ENCODE measurements at regions of chr10 and their contacts with region 1.

Region 1: GRCh38 chr10:94088926-94089381 is 95.2 kb downstream of the PLCE1 start:
- DNase-seq: peak in 1 of 2 donors; percentile 23
- ATAC-seq: peak in 6 of 8 donors; percentile 47 to 75 (median 51)
- H3K4me3 ChIP-seq: peak overlapping the region in 8 of 10 donors; percentile 10 to 48 (median 35)
- H3K27ac ChIP-seq: peak overlapping the region in 2 of 10 donors; percentile 8 to 62
- H3K4me1 ChIP-seq: peaks cover 0 to 52% (median 18%) of the 10 kb centered on the region in 9 donors
- H3K27me3 ChIP-seq: no peaks in the 10 kb centered on the region
- CTCF ChIP-seq: no peak

Region 2: DNA sequence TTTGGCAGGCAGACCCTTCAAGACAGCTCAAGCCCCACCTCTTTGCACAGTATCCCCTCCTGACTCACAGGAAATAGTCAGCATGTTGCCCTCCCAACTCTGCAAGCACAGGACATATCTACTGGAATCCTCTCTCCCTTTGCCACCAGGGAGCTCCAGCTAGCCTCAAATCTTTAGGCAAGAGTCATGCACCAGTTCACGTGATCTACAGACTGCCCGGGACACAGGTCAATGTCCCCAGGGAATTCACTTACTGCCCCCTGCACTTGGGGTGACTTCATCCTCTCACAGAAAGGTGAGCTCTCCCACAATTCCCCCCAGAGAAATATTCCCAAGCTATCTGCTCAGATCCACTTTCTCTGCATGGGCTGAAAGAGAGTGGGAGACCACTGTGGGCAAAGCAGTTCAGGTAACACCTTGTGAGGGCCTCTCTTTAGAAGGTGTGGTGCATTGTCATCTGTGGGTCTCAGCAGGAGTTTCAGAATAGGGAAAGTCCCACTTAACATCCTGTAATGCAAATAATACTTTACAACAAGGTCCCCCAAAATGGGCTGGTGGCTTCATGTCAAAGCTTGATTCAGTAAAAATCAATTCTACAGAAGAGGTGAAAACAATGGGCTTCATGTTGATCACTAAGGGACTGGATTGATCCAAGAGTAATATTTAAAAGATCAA is 143.9 kb after region 1 on chr10:
- intact Hi-C with region 1: loop called in 1 of 10 experiments (anchors 10 kb)
- DNase-seq: no peak
- ATAC-seq: no peak
- H3K4me3 ChIP-seq: no peak overlapping the region
- H3K27ac ChIP-seq: no peak overlapping the region
- H3K4me1 ChIP-seq: no peaks in the 10 kb centered on the region
- H3K27me3 ChIP-seq: no peaks in the 10 kb centered on the region
- CTCF ChIP-seq: no peak

Region 3: GRCh38 chr10:94292434-94293090 is 203.6 kb after region 1 on chr10:
- intact Hi-C with region 1: no loop called
- DNase-seq: peak; percentile 41 to 46
- ATAC-seq: peak in 6 of 8 donors; percentile 20 to 73 (median 56)
- H3K4me3 ChIP-seq: no peak overlapping the region
- H3K27ac ChIP-seq: peak overlapping the region in 7 of 10 donors; percentile 26 to 68 (median 41)
- H3K4me1 ChIP-seq: peaks cover 0 to 30% (median 19%) of the 10 kb centered on the region in 9 donors
- H3K27me3 ChIP-seq: no peaks in the 10 kb centered on the region
- CTCF ChIP-seq: no peak